Gastrocnemius medialis (tissue), 4 donors: ENCODE measurements at regions of chr6 and their contacts with region 1.

Region 1: GRCh38 chr6:7238900-7239589 is 74.0 kb downstream of the SSR1 start:
- DNase-seq: peak; percentile 82 to 95
- ATAC-seq: peak; percentile 63 to 82
- H3K4me3 ChIP-seq: no peak overlapping the region
- H3K27ac ChIP-seq: peak overlapping the region; percentile 63 to 75 (median 66)
- H3K4me1 ChIP-seq: peaks cover 32 to 37% of the 10 kb centered on the region in 2 donors
- H3K27me3 ChIP-seq: no peaks in the 10 kb centered on the region
- CTCF ChIP-seq: peak; percentile 73 to 80 (median 77)
- POLR2A ChIP-seq: no peak

Region 2: GRCh38 chr6:6676910-6677441 is 562.1 kb before region 1 on chr6:
- in situ Hi-C with region 1: loop called in 3 of 4 experiments (anchors 5 to 25 kb)
- intact Hi-C with region 1: loop called (anchors 1 kb)
- DNase-seq: peak; percentile 50 to 68
- ATAC-seq: peak; percentile 88 to 89
- H3K4me3 ChIP-seq: no peak overlapping the region
- H3K27ac ChIP-seq: peak overlapping the region in 3 of 4 donors; percentile 22 to 51 (median 49)
- H3K4me1 ChIP-seq: peaks cover 0 to 3% of the 10 kb centered on the region in 2 donors
- H3K27me3 ChIP-seq: no peaks in the 10 kb centered on the region
- CTCF ChIP-seq: peak; percentile 88 to 98 (median 91)
- POLR2A ChIP-seq: no peak

Region 3: GRCh38 chr6:6918216-6918983 is 320.6 kb before region 1 on chr6:
- in situ Hi-C with region 1: loop called in 1 of 4 experiments (anchors 25 kb)
- intact Hi-C with region 1: no loop called
- DNase-seq: peak in 1 of 2 donors; percentile 42
- ATAC-seq: peak in 1 of 2 donors; percentile 25
- H3K4me3 ChIP-seq: no peak overlapping the region
- H3K27ac ChIP-seq: peak overlapping the region; percentile 80 to 96 (median 89)
- H3K4me1 ChIP-seq: peaks cover 51 to 64% of the 10 kb centered on the region in 2 donors
- H3K27me3 ChIP-seq: no peaks in the 10 kb centered on the region
- CTCF ChIP-seq: no peak
- POLR2A ChIP-seq: no peak

Region 4: DNA sequence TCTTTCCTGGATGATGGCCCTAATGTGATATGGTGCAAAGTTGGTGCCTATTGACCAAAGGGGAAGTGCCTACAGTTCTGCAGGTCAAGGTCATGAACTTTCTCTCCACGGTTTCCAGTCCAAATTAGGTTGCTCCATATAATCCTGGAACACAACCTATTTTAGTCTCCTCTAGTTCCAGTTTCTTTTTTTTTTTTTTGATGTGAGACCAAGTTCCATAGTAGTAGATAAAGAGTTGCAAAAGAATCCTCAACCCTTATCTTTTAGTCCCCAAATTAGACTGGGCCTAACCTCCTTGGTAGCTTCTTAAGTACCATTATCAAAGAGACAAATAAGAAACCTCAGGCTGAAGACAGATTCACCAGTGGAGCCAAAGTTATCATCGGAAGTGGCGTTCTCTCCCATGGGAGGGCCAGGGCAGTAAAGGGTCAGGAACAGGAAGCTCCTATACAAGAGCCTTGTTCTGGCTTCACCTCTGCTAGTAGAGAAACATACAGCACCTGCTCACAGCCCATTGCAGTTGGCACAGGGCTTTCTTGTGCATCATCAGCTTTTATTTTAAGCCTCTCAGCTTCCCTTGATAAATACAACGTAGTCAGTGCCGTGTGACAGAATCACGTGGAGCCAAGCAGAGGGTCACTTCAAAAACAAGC is 263.5 kb before region 1 on chr6:
- in situ Hi-C with region 1: no loop called
- intact Hi-C with region 1: loop called (anchors 5 kb)
- DNase-seq: peak; percentile 82 to 86
- ATAC-seq: peak; percentile 95 to 96
- H3K4me3 ChIP-seq: no peak overlapping the region
- H3K27ac ChIP-seq: peak overlapping the region; percentile 82 to 93 (median 82)
- H3K4me1 ChIP-seq: peaks cover 18 to 28% of the 10 kb centered on the region in 2 donors
- H3K27me3 ChIP-seq: no peaks in the 10 kb centered on the region
- CTCF ChIP-seq: no peak
- POLR2A ChIP-seq: no peak

Region 5: GRCh38 chr6:7107578-7108195 is 131.4 kb before region 1 on chr6 and contains the start of gene RREB1:
- in situ Hi-C with region 1: no loop called
- intact Hi-C with region 1: loop called (anchors 1 kb)
- DNase-seq: peak; percentile 64 to 71
- ATAC-seq: peak; percentile 82 to 85
- H3K4me3 ChIP-seq: peak within 1 kb of the TSS; percentile 93 to 98 (median 96)
- H3K27ac ChIP-seq: peak within 1 kb of the TSS; percentile 85 to 96 (median 94)
- H3K4me1 ChIP-seq: peaks cover 17 to 22% of the 10 kb centered on the region in 2 donors
- H3K27me3 ChIP-seq: no peaks in the 10 kb centered on the region
- CTCF ChIP-seq: no peak
- POLR2A ChIP-seq: peak; percentile 85 to 91
- total RNA-seq, gene RREB1: 18.0 to 41.3 (median 39.2) TPM